H1 (cell line): ENCODE measurements at regions of chr1 and their contacts with region 1.

Region 1: DNA sequence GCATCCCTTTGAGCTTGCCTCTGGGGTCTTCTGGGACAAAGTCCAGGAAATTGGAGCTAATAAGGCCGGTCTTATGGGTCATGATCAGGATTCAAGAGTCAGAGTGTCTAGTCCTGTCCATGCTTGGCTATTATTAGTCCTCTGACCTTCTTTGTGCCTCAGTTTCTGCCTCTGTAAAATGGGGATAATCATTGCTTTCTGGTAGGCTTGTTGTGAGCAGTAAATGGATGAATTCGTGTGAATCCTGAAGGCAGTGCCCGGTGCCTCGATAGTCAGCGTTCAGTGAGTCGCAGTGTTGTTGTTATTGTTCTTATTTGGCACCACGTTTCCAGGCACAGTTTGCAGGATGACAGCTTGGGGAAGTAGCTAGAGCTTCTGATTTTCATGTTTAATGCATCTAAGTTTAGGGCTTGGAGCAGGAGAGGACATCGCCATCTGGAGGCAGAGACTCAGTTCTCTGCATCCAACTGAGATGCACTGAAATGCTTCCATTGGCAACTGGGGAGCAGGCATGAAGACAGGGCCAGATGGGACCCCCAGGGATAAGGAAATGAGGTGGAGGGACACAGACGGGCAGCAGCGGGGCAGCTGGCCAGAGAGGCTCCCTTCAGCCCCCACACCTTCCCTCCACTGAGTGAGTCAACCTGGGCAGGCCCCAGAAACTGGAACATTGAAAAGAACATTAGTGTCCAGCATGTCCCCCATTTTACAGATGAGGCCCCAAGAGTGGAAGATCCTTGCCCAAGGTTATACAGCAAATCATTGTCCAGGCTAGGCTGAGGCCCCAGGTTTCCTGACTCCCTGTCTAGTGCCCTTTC is 160.3 kb downstream of the PTPRU start:
- DNase-seq: no peak
- H3K4me3 ChIP-seq: no peak overlapping the region
- H3K27ac ChIP-seq: no peak overlapping the region
- H3K4me1 ChIP-seq: 0 out of 7 replicates have a peak, but pooled peaks cover 0 to 2% (median 0%) of the 10 kb centered on the region in 4 experiments
- H3K27me3 ChIP-seq: no peaks in the 10 kb centered on the region
- CTCF ChIP-seq: peak; percentile 41 to 61 (median 58)
- EP300 ChIP-seq: no peak
- POLR2A ChIP-seq: no peak
- RAD21 ChIP-seq: peak; percentile 38 to 53; a peak in 3 of 4 replicates

Region 2: GRCh38 chr1:29408831-29409605 is 12.4 kb after region 1 on chr1:
- CTCF ChIA-PET with region 1: interaction called, 18 read pairs
- POLR2A ChIA-PET with region 1: no interaction called
- DNase-seq: peak in 1 of 2 experiments; percentile 19
- H3K4me3 ChIP-seq: no peak overlapping the region
- H3K27ac ChIP-seq: no peak overlapping the region
- H3K4me1 ChIP-seq: no peaks in the 10 kb centered on the region
- H3K27me3 ChIP-seq: no peaks in the 10 kb centered on the region
- CTCF ChIP-seq: no peak
- EP300 ChIP-seq: no peak
- POLR2A ChIP-seq: no peak
- RAD21 ChIP-seq: no peak